ENCODE measurements at regions of chr3 and their contacts with region 1.

Region 1: DNA sequence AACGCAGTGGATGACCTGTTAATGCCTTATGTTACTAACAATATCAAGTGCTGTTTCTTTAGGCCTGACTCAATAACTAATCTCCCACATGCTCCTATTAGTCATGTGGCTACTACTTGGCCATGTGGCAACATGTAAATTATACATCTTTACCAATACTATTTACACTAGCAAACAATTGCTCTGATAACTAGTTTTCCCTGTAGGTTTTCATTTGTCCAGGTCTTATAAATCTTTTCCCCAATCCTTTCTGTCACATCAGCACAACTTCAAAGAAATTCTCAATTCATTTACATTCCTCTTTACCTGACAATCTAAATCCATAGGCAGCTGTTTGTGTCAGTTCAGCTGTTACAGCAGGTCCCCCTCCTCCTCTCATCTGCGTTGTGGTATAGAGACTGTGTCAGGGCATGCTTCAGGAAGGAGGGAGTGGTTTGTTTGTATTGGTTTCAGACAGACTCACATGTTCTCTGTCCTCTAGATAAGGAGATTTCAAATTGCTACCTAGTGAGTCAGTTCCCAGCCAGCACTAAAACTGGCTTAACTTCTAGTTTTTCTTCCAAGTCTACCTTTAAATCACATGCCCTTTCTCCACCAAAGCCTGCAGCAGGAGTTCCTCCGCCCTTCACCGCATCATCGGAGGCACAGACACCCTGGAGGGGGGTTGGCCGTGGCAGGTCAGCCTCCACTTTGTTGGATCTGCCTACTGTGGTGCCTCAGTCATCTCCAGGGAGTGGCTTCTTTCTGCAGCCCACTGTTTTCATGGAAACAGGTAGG is 11.3 kb upstream of the C3orf52 start:
- DNase-seq: peak; percentile 94 to 96
- H3K4me3 ChIP-seq: peak overlapping the region; percentile 5; the same call in 1 of the 2 replicates
- H3K4me3 Mint-ChIP-seq: peak overlapping the region; percentile 63
- H3K27ac Mint-ChIP-seq: peak overlapping the region; percentile 85
- H3K4me1 ChIP-seq: peaks cover 34% of the 10 kb centered on the region
- H3K4me1 Mint-ChIP-seq: peaks cover 35% of the 10 kb centered on the region
- H3K27me3 ChIP-seq: no peaks in the 10 kb centered on the region
- H3K27me3 Mint-ChIP-seq: no peaks in the 10 kb centered on the region
- CTCF ChIP-seq: no peak

Region 2: DNA sequence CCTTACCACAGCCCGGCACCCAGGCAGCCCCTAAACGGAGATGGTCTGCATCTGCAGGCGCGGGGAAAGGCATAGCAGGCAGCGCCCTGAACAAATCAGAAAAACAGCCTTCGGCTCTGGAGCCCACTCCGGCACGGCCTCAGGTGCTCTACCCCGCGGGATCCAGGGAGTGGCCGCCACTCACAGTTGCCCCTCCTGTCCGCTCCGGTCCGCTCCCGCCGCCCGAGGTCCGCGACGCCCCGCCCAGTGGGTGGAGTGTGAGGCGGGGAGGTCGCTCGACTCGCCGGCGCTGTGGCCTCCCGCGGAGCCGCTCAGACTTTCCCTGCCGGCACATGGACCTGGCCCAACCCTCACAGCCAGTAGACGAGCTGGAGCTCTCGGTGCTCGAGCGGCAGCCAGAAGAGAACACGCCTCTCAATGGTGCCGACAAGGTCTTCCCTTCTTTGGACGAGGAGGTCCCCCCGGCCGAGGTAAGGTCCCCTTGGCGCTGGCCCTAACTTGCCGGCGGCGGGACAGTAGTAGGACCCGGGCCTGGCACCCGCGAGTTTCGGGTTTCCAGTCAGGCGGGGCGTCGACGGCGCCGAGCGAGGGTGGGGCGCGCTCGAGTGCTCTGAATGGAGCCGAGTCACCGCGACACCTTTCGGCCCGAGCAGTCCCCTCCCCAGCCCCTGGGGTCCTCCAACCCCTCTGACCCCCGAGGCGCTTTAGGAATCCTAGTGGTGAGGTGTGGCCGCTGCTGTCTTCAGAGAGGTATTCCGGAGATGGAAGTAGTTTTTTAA is 11.4 kb after region 1 on chr3 and contains the start of gene C3orf52:
- CTCF ChIA-PET with region 1: no interaction called
- POLR2A ChIA-PET with region 1: interaction called, 9 read pairs
- intact Hi-C with region 1: loop called (anchors 1 kb)
- DNase-seq: peak; percentile 92 to 95
- H3K4me3 ChIP-seq: peak within 1 kb of the TSS; percentile 74
- H3K4me3 Mint-ChIP-seq: peak within 1 kb of the TSS; percentile 73
- H3K27ac Mint-ChIP-seq: peak within 1 kb of the TSS; percentile 94
- H3K4me1 ChIP-seq: peaks cover 66% of the 10 kb centered on the region
- H3K4me1 Mint-ChIP-seq: peaks cover 56% of the 10 kb centered on the region
- H3K27me3 ChIP-seq: no peaks in the 10 kb centered on the region
- H3K27me3 Mint-ChIP-seq: no peaks in the 10 kb centered on the region
- CTCF ChIP-seq: peak; percentile 21 to 34
- total RNA-seq, gene C3orf52: 52.4 and 64.5 TPM in 2 replicates

Region 3: DNA sequence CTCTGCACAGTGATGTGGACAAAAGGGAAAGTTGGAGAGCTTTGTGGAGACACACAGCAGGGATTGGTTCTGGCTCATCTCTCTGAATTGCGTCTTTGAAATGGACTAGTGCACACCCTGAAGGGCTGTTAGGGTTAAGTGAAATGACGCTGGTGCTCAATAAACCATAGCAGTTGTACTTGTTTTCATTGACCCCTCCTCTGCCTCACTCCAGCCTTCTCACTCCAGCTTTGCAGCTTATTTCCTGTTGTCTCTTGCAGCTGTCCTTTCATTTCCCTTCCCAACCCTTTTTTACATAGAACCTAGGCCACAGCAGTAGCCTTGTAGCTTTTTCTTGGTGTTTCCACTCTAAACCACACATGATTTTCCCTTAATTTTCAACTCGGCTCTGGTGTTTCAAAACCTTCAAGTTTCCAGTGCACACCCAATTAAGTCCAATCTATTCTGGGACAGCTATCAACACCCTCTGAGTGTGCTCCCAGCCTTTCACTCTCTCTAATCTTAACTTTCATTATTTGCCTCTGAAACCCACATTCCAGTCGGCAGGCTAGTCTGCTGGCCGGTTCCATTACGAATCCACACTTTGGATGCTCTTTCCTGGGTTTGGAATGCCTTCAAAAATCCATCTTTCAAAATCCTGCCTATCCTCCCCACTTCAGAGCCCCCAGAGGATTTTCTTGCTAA is 17.7 kb after region 1 on chr3:
- CTCF ChIA-PET with region 1: no interaction called
- POLR2A ChIA-PET with region 1: no interaction called
- intact Hi-C with region 1: loop called (anchors 2 kb)
- DNase-seq: no peak
- H3K4me3 ChIP-seq: no peak overlapping the region
- H3K4me3 Mint-ChIP-seq: peak overlapping the region; percentile 13
- H3K27ac Mint-ChIP-seq: peak overlapping the region; percentile 29
- H3K4me1 ChIP-seq: peaks cover 65% of the 10 kb centered on the region
- H3K4me1 Mint-ChIP-seq: peaks cover 52% of the 10 kb centered on the region
- H3K27me3 ChIP-seq: no peaks in the 10 kb centered on the region
- H3K27me3 Mint-ChIP-seq: no peaks in the 10 kb centered on the region
- CTCF ChIP-seq: no peak

Region 4: DNA sequence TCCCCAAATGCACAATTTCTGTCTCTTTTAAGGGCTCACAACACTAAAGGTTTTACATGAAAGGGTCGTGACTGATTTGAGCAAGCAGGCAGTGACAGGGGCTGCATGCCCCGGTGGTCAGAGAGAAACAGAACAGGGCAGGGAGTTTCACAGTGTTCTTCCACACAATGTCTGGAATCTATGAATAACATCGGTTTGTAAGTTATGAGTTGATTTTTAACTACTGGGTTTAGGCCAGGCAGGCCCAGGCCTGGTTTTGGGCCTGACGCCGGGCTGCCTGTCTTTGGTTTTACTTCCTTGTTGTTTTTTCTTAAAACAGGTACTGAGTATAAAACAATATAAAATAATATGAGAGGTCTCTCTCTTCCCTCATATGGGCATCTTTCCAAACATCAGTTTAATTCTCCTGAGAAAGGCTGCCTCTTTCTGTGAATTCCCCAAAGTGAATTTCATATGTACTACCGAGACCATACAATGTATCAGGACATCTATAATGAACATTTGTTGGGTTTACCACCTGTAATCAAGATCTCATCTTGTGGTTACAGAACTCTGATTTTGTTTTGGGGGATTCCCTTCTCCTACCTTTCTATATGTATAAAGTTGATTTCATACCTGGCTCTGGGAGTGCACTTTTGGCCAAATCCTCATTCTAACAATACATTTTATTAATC is 332.4 kb after region 1 on chr3:
- CTCF ChIA-PET with region 1: no interaction called
- POLR2A ChIA-PET with region 1: no interaction called
- intact Hi-C with region 1: no loop called
- DNase-seq: no peak
- H3K4me3 ChIP-seq: no peak overlapping the region
- H3K4me3 Mint-ChIP-seq: no peak overlapping the region
- H3K27ac Mint-ChIP-seq: peak overlapping the region; percentile 45
- H3K4me1 ChIP-seq: peaks cover 34% of the 10 kb centered on the region
- H3K4me1 Mint-ChIP-seq: peaks cover 30% of the 10 kb centered on the region
- H3K27me3 ChIP-seq: no peaks in the 10 kb centered on the region
- H3K27me3 Mint-ChIP-seq: no peaks in the 10 kb centered on the region
- CTCF ChIP-seq: no peak